Caco-2 (cell line): ENCODE measurements at regions of chrX and their contacts with region 1.

Region 1: GRCh38 chrX:27924261-27924660 is 57.0 kb downstream of the DCAF8L1 start:
- DNase-seq: no peak
- H3K4me3 ChIP-seq: no peak overlapping the region
- H3K4me3 Mint-ChIP-seq: no peak overlapping the region
- H3K27ac Mint-ChIP-seq: no peak overlapping the region
- H3K4me1 ChIP-seq: no peaks in the 10 kb centered on the region
- H3K4me1 Mint-ChIP-seq: peaks cover 11% of the 10 kb centered on the region
- H3K27me3 ChIP-seq: no peaks in the 10 kb centered on the region
- H3K27me3 Mint-ChIP-seq: no peaks in the 10 kb centered on the region
- CTCF ChIP-seq: no peak

Region 2: GRCh38 chrX:27968878-27969277 is 44.6 kb after region 1 on chrX:
- CTCF ChIA-PET with region 1: no interaction called
- POLR2A ChIA-PET with region 1: no interaction called
- intact Hi-C with region 1: no loop called
- DNase-seq: no peak
- H3K4me3 ChIP-seq: no peak overlapping the region
- H3K4me3 Mint-ChIP-seq: no peak overlapping the region
- H3K27ac Mint-ChIP-seq: no peak overlapping the region
- H3K4me1 ChIP-seq: no peaks in the 10 kb centered on the region
- H3K4me1 Mint-ChIP-seq: no peaks in the 10 kb centered on the region
- H3K27me3 ChIP-seq: no peaks in the 10 kb centered on the region
- H3K27me3 Mint-ChIP-seq: no peaks in the 10 kb centered on the region
- CTCF ChIP-seq: no peak

Region 3: DNA sequence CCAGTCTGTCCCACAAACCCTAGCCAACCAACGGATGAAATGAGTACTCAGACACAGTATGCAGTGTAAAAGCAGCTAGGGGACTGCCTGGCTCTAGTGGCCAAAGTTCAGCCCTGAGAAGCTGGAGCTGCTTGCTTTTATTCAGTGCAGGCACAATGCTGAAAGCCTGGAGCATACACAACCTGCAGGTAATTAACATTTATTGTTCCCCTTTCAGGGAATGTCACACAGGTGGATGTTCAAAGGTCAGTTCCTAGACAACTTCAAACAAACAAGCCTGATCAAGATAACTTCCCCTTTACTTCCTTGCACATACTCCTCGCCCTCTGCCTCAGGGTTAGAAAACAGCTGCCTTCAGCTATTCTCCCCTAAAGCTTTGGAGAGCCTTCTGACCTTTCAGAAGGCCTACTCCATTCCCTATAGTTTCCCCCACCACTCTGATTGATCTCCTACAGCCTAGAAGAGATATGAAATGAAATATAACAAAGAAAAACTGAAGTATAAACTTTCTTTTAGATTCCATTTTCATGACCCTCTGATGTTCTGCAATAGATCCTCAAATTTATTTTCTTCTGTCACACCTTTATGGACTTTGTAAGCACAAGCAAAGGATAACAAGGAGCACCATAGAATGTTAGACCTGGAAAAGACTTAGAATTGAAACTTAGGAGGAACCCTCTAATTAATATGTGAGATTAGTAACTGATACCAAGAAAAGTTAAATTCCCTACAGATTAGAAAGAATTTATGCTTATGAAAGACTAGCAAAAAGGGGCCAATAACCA is 63.8 kb after region 1 on chrX:
- CTCF ChIA-PET with region 1: no interaction called
- POLR2A ChIA-PET with region 1: no interaction called
- intact Hi-C with region 1: loop called (anchors 10 kb)
- DNase-seq: peak; percentile 69 to 81
- H3K4me3 ChIP-seq: no peak overlapping the region
- H3K4me3 Mint-ChIP-seq: no peak overlapping the region
- H3K27ac Mint-ChIP-seq: peak overlapping the region; percentile 81
- H3K4me1 ChIP-seq: peaks cover 15% of the 10 kb centered on the region
- H3K4me1 Mint-ChIP-seq: no peaks in the 10 kb centered on the region
- H3K27me3 ChIP-seq: no peaks in the 10 kb centered on the region
- H3K27me3 Mint-ChIP-seq: no peaks in the 10 kb centered on the region
- CTCF ChIP-seq: no peak